ENCODE measurements at regions of chr21 and their contacts with region 1.

Region 1: GRCh38 chr21:23612210-23612609 is 1995.1 kb downstream of the MRPL39 start:
- DNase-seq: no peak
- ATAC-seq: no peak
- H3K4me3 ChIP-seq: no peak overlapping the region
- H3K27ac ChIP-seq: no peak overlapping the region
- H3K4me1 ChIP-seq: no peaks in the 10 kb centered on the region
- H3K27me3 ChIP-seq: no peaks in the 10 kb centered on the region
- CTCF ChIP-seq: no peak
- POLR2A ChIP-seq: no peak

Region 2: GRCh38 chr21:23694390-23694789 is 82.2 kb after region 1 on chr21:
- in situ Hi-C with region 1: loop called in 1 of 4 experiments (anchors 10 kb)
- intact Hi-C with region 1: no loop called
- DNase-seq: no peak
- ATAC-seq: no peak
- H3K4me3 ChIP-seq: no peak overlapping the region
- H3K27ac ChIP-seq: no peak overlapping the region
- H3K4me1 ChIP-seq: no peaks in the 10 kb centered on the region
- H3K27me3 ChIP-seq: no peaks in the 10 kb centered on the region
- CTCF ChIP-seq: no peak
- POLR2A ChIP-seq: no peak

Region 3: DNA sequence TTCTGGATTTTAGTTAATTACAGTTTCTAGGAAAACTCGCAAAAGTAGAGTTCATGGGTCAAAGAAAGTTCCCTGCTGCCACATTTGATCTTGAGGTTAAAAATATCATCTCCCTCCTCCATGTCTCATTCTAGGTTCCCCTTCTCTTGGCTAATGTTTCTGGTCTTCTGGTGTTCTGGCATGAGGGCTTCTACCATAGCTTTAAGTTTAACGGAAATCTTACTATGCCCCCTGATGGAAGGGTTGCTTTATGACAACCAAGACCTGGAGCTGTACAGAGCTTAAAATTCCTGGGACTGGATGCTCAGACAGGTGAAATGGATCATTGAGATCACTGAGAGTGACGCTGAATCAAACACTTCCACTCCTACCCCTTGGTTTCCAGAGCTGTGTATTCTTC is 113.4 kb after region 1 on chr21:
- in situ Hi-C with region 1: no loop called
- intact Hi-C with region 1: no loop called
- DNase-seq: no peak
- ATAC-seq: no peak
- H3K4me3 ChIP-seq: no peak overlapping the region
- H3K27ac ChIP-seq: no peak overlapping the region
- H3K4me1 ChIP-seq: no peaks in the 10 kb centered on the region
- H3K27me3 ChIP-seq: no peaks in the 10 kb centered on the region
- CTCF ChIP-seq: no peak
- POLR2A ChIP-seq: no peak

Measured in gastrocnemius medialis (tissue), 4 donors.